Heart left ventricle (tissue), 16 donors: ENCODE measurements at regions of chr10 and their contacts with region 1.

Region 1: DNA sequence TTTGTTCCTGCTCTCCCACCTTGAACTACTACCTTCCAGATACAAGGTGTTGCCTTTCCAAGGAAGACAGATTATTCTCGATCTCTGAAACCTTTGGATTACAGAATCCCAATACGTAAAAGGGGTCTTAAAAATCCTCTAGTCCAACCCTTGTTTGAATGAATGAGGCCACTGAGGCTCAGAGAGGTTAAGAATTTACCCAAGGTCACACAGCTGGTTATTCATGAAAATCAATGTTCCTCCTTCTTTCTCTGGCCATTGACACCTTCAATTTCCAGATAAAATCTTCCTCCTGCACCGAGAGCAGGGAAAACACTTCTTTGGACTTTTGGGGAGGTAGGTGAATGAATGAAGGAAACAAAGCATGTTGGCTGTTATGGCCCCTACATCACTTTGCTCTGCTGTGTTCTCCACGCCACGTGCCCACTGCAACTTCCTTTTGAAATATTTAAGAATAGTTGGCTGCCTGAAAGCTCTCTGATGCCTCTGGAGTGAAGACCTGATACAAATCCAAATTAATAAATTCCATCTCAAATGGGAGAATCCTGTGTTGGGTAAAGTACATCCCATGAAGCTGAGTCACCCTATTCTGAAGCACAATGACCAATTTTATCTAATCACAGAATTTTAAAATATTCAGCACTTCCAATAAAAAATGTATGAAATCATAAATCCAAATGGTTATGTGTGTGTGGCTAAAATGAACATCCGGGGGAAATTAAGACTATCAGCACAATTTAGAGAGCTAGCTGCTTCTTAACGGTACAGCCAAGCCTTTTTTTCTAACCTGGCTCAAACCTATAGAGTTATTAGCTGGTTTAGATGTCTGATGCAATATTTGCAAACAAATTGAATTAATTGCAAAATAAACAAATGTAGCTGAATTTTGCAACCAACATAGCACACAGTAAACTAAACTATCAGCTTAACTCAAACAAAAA is 7.3 kb downstream of the SVIL start:
- DNase-seq: no peak
- ATAC-seq: no peak
- H3K4me3 ChIP-seq: peak overlapping the region in 2 of 12 donors; percentile 6 to 62
- H3K27ac ChIP-seq: peak overlapping the region in 3 of 12 donors; percentile 28 to 90 (median 86)
- H3K4me1 ChIP-seq: peaks cover 0 to 64% (median 33%) of the 10 kb centered on the region in 12 donors
- H3K27me3 ChIP-seq: no peaks in the 10 kb centered on the region
- CTCF ChIP-seq: no peak
- POLR2A ChIP-seq: no peak

Region 2: GRCh38 chr10:29535012-29535777 is 92.3 kb before region 1 on chr10:
- intact Hi-C with region 1: loop called in 1 of 10 experiments (anchors 5 kb)
- DNase-seq: peak in 4 of 5 donors; percentile 53 to 74 (median 59)
- ATAC-seq: peak; percentile 68 to 82 (median 72)
- H3K4me3 ChIP-seq: peak overlapping the region in 5 of 12 donors; percentile 6 to 30 (median 15)
- H3K27ac ChIP-seq: peak overlapping the region; percentile 61 to 87 (median 76)
- H3K4me1 ChIP-seq: peaks cover 0 to 55% (median 21%) of the 10 kb centered on the region in 12 donors
- H3K27me3 ChIP-seq: no peaks in the 10 kb centered on the region
- CTCF ChIP-seq: peak; percentile 36 to 72 (median 62)
- POLR2A ChIP-seq: no peak

Region 3: GRCh38 chr10:29881336-29881771 is 253.9 kb after region 1 on chr10:
- intact Hi-C with region 1: no loop called
- DNase-seq: peak in 4 of 5 donors; percentile 24 to 45 (median 37)
- ATAC-seq: peak; percentile 55 to 81 (median 68)
- H3K4me3 ChIP-seq: no peak overlapping the region
- H3K27ac ChIP-seq: peak overlapping the region in 8 of 12 donors; percentile 13 to 63 (median 35)
- H3K4me1 ChIP-seq: peaks cover 0 to 34% (median 8%) of the 10 kb centered on the region in 12 donors
- H3K27me3 ChIP-seq: no peaks in the 10 kb centered on the region
- CTCF ChIP-seq: no peak
- POLR2A ChIP-seq: no peak